B cell (primary cell): ENCODE measurements at regions of chr18 and their contacts with region 1.

Region 1: GRCh38 chr18:12934454-12935071 is 13.2 kb upstream of the SEH1L start:
- DNase-seq: peak; percentile 83
- ATAC-seq: peak; percentile 68
- H3K4me3 ChIP-seq: no peak overlapping the region
- H3K4me3 Mint-ChIP-seq: no peak overlapping the region
- H3K27ac ChIP-seq: no peak overlapping the region
- H3K27ac Mint-ChIP-seq: no peak overlapping the region
- H3K4me1 ChIP-seq: no peaks in the 10 kb centered on the region
- H3K4me1 Mint-ChIP-seq: peaks cover 2% of the 10 kb centered on the region
- H3K27me3 ChIP-seq: no peaks in the 10 kb centered on the region
- H3K27me3 Mint-ChIP-seq: peaks cover 7% of the 10 kb centered on the region
- CTCF ChIP-seq: peak; percentile 94

Region 2: GRCh38 chr18:12478269-12479047 is 456.1 kb before region 1 on chr18:
- CTCF ChIA-PET with region 1: no interaction called
- POLR2A ChIA-PET with region 1: no interaction called
- intact Hi-C with region 1: no loop called
- DNase-seq: no peak
- ATAC-seq: no peak
- H3K4me3 ChIP-seq: no peak overlapping the region
- H3K4me3 Mint-ChIP-seq: no peak overlapping the region
- H3K27ac ChIP-seq: no peak overlapping the region
- H3K27ac Mint-ChIP-seq: no peak overlapping the region
- H3K4me1 ChIP-seq: no peaks in the 10 kb centered on the region
- H3K4me1 Mint-ChIP-seq: no peaks in the 10 kb centered on the region
- H3K27me3 ChIP-seq: no peaks in the 10 kb centered on the region
- H3K27me3 Mint-ChIP-seq: no peaks in the 10 kb centered on the region
- CTCF ChIP-seq: no peak

Region 3: DNA sequence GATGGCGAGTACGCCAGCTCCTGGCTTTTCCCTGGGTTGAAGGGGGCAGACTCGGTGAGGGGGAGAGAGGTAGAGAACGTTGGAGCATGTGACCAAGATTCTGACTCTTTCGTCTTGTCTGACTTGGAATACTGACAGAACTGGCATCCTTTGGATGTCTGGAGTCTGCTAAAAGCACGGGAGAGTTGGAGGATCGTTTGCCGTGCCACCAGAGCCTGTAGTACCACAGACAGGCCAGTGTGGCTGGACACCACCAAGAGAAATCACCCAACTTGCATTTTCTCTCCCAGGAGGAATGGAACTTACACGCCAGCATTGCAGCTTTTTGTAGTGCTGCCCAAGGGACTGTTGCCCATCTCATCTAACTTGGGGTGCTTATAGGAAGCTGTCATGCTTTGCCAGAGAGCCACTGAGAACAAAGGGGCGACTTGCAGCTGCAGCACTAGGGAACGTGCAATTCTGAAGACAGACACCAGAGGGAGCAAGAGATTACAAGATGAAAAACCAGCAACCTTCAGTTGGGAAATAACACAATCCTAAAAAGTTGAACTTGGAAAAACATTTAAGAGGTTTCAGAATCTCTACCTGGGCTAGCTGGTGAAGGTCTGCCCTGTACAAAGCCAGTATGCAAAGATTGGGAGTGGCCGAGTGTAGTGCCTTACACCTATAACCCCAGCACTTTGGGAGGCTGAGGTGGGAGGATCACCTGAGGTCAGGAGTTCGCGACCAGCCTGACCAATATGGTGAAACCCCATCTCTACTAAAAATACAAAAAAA is 207.6 kb before region 1 on chr18:
- CTCF ChIA-PET with region 1: interaction called, 200 read pairs
- POLR2A ChIA-PET with region 1: no interaction called
- intact Hi-C with region 1: no loop called
- DNase-seq: peak; percentile 77
- ATAC-seq: peak; percentile 61
- H3K4me3 ChIP-seq: no peak overlapping the region
- H3K4me3 Mint-ChIP-seq: no peak overlapping the region
- H3K27ac ChIP-seq: no peak overlapping the region
- H3K27ac Mint-ChIP-seq: no peak overlapping the region
- H3K4me1 ChIP-seq: no peaks in the 10 kb centered on the region
- H3K4me1 Mint-ChIP-seq: no peaks in the 10 kb centered on the region
- H3K27me3 ChIP-seq: no peaks in the 10 kb centered on the region
- H3K27me3 Mint-ChIP-seq: no peaks in the 10 kb centered on the region
- CTCF ChIP-seq: peak; percentile 93

Region 4: GRCh38 chr18:12744103-12744502 is 190.5 kb before region 1 on chr18:
- CTCF ChIA-PET with region 1: interaction called, 94 read pairs
- POLR2A ChIA-PET with region 1: no interaction called
- intact Hi-C with region 1: loop called (anchors 1 kb)
- DNase-seq: peak; percentile 59
- ATAC-seq: peak; percentile 57
- H3K4me3 ChIP-seq: no peak overlapping the region
- H3K4me3 Mint-ChIP-seq: no peak overlapping the region
- H3K27ac ChIP-seq: no peak overlapping the region
- H3K27ac Mint-ChIP-seq: no peak overlapping the region
- H3K4me1 ChIP-seq: peaks cover 0 to 2% of the 10 kb centered on the region in 2 donors
- H3K4me1 Mint-ChIP-seq: peaks cover 2% of the 10 kb centered on the region
- H3K27me3 ChIP-seq: peaks cover 0 to 5% (median 0%) of the 10 kb centered on the region in 4 experiments
- H3K27me3 Mint-ChIP-seq: peaks cover 8% of the 10 kb centered on the region
- CTCF ChIP-seq: peak; percentile 75

Region 5: GRCh38 chr18:12904012-12904516 is 30.5 kb before region 1 on chr18:
- CTCF ChIA-PET with region 1: interaction called, 10 read pairs
- POLR2A ChIA-PET with region 1: no interaction called
- intact Hi-C with region 1: no loop called
- DNase-seq: no peak
- ATAC-seq: no peak
- H3K4me3 ChIP-seq: no peak overlapping the region
- H3K4me3 Mint-ChIP-seq: no peak overlapping the region
- H3K27ac ChIP-seq: no peak overlapping the region
- H3K27ac Mint-ChIP-seq: no peak overlapping the region
- H3K4me1 ChIP-seq: no peaks in the 10 kb centered on the region
- H3K4me1 Mint-ChIP-seq: peaks cover 3% of the 10 kb centered on the region
- H3K27me3 ChIP-seq: peaks cover 0 to 11% (median 2%) of the 10 kb centered on the region in 4 experiments
- H3K27me3 Mint-ChIP-seq: peaks cover 30% of the 10 kb centered on the region
- CTCF ChIP-seq: no peak

Region 6: GRCh38 chr18:12921178-12921577 is 13.4 kb before region 1 on chr18:
- CTCF ChIA-PET with region 1: interaction called, 15 read pairs
- POLR2A ChIA-PET with region 1: no interaction called
- intact Hi-C with region 1: no loop called
- DNase-seq: no peak
- ATAC-seq: no peak
- H3K4me3 ChIP-seq: no peak overlapping the region
- H3K4me3 Mint-ChIP-seq: no peak overlapping the region
- H3K27ac ChIP-seq: no peak overlapping the region
- H3K27ac Mint-ChIP-seq: no peak overlapping the region
- H3K4me1 ChIP-seq: no peaks in the 10 kb centered on the region
- H3K4me1 Mint-ChIP-seq: no peaks in the 10 kb centered on the region
- H3K27me3 ChIP-seq: no peaks in the 10 kb centered on the region
- H3K27me3 Mint-ChIP-seq: no peaks in the 10 kb centered on the region
- CTCF ChIP-seq: no peak